ENCODE measurements at regions of chr2 and their contacts with region 1.

Region 1: DNA sequence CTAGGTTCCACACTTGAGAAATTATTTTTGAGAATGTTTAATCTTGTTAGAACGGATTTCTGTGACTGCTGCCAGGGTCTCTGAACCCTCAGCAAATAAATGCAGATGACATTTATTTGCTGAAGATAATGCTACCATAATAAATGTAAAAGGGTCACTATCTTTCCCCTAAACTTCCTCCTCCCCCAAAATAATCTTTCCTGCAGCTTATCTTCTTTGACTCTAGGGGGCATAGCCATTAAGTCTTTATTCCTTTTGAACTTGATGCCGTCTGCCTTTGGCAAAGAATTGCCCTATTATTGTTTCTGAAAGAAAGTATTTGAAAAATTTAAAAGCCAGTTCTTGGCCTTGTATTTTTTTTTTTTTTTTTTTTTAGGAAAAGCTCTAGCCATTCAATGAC is 63.6 kb upstream of the ACSL3 start:
- DNase-seq: no peak
- ATAC-seq: no peak
- H3K4me3 Mint-ChIP-seq: no peak overlapping the region
- H3K27ac Mint-ChIP-seq: no peak overlapping the region
- H3K4me1 Mint-ChIP-seq: no peaks in the 10 kb centered on the region
- H3K27me3 Mint-ChIP-seq: no peaks in the 10 kb centered on the region
- CTCF ChIP-seq: no peak

Region 2: DNA sequence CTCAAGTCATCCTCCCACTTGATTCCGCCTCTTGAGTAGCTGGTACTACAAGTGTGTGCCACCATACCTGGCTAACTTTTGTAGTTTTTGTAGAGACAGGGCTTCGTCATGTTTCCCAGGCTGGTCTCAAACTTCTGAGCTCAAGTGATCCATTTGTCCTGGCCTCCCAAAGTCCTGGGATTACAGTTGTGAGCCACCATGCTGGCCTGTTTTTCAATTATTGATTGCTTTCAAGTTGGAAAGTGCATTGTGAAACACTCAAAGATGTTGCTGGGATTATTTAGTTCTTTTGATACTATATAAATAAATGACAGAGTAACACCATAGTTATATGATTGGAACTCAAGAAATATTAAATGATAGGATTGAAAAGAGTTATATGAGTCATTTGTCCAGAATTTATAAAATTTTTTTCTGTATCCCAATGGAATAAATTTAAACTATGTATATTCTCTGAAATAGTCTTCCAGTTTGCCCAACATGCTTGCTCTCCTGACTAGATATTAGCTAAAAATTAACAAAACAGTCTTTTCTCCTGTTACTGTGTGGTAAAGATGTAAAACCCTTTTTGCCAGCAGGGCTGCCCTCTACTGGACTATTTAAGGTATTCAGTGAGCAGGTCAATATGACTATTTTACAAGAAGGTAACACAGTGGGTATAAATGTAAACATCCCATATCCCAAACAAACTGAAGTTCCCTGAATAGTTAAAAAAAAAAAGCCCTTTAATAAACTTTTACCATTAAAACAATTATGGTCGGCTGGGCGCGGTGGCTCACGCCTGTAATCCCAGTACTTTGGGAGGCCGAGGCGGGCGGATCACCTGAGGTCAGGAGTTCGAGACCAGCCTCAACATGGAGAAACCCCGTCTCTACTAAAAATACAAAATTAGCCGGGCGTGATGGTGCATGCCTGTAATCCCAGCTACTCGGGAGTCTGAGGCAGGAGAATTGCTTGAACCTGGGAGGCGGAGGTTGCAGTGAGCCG is 106.3 kb after region 1 on chr2:
- CTCF ChIA-PET with region 1: interaction called, 12 read pairs
- POLR2A ChIA-PET with region 1: no interaction called
- intact Hi-C with region 1: loop called (anchors 1 kb)
- DNase-seq: no peak
- ATAC-seq: peak; percentile 69
- H3K4me3 Mint-ChIP-seq: no peak overlapping the region
- H3K27ac Mint-ChIP-seq: no peak overlapping the region
- H3K4me1 Mint-ChIP-seq: peaks cover 9% of the 10 kb centered on the region
- H3K27me3 Mint-ChIP-seq: no peaks in the 10 kb centered on the region
- CTCF ChIP-seq: no peak

Region 3: GRCh38 chr2:222939208-222939856 is 142.1 kb after region 1 on chr2:
- CTCF ChIA-PET with region 1: interaction called, 14 read pairs
- POLR2A ChIA-PET with region 1: no interaction called
- intact Hi-C with region 1: loop called (anchors 1 kb)
- DNase-seq: peak; percentile 18
- ATAC-seq: peak; percentile 81
- H3K4me3 Mint-ChIP-seq: no peak overlapping the region
- H3K27ac Mint-ChIP-seq: no peak overlapping the region
- H3K4me1 Mint-ChIP-seq: no peaks in the 10 kb centered on the region
- H3K27me3 Mint-ChIP-seq: no peaks in the 10 kb centered on the region
- CTCF ChIP-seq: no peak